Left ventricle myocardium inferior (tissue), 1 donor: ENCODE measurements at regions of chr13 and their contacts with region 1.

Region 1: DNA sequence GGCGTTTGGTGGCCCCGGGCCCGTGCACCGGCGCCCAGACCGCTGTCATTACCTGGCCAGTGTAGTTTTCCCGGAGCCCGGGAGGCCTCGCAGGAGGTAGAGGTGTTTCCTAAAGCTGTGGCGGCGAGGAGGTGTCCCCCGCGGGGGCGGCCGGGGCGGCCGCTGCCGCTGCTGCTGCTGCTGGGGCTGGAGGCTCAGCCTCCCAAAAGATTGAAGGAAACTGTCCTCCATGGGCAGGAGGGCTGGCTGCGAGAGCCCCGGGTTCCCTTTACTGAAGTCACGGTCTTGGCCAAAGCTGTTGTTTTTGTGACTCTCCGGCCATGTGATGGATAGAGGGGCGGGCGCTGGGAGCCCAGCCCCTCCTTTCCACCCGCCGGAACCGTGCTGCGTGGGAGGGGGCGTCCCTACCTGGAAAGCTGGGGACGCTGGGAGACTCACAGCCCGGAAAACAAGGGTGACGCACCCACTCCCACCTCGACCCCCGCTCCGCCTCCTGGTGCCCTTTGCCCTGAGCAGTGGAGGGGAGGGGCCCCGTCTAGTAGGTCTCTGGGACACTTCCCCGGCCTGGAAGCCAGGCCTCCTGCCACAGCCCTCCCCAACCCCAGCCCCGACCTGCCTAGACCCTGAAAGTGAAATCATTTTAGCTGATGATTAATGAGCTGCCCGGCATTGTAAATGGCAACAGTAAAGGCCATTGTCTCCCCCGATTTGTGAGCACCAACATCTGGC is at the start of gene N4BP2L1:
- DNase-seq: peak; percentile 64
- H3K4me3 ChIP-seq: peak within 1 kb of the TSS; percentile 83
- H3K27ac ChIP-seq: peak within 1 kb of the TSS; percentile 92
- H3K4me1 ChIP-seq: peaks cover 56% of the 10 kb centered on the region
- H3K27me3 ChIP-seq: no peaks in the 10 kb centered on the region
- CTCF ChIP-seq: no peak
- total RNA-seq, gene N4BP2L1: 4.6 TPM

Region 2: DNA sequence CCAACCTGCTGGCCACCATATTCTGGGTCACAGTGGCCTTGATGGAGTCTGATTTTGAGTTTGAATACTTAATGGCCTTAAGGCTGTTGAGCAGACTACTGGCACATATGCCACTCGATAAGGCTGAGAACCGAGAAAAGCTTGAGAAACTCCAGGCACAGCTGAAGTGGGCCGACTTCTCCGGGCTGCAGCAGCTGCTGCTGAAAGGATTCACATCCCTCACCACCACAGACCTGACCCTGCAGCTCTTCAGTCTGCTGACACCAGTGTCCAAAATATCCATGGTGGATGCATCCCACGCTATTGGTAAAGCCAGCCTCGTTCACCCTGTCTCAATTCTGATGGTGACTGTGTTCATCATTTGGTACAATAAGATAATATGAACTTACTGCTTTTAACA is 190.3 kb before region 1 on chr13:
- intact Hi-C with region 1: no loop called
- DNase-seq: no peak
- H3K4me3 ChIP-seq: no peak overlapping the region
- H3K27ac ChIP-seq: no peak overlapping the region
- H3K4me1 ChIP-seq: peaks cover 26% of the 10 kb centered on the region
- H3K27me3 ChIP-seq: no peaks in the 10 kb centered on the region
- CTCF ChIP-seq: no peak

Region 3: GRCh38 chr13:32538621-32539246 is 110.7 kb after region 1 on chr13 and contains the start of gene N4BP2L2:
- intact Hi-C with region 1: loop called (anchors 10 kb)
- DNase-seq: peak; percentile 90
- H3K4me3 ChIP-seq: peak within 1 kb of the TSS; percentile 80
- H3K27ac ChIP-seq: peak within 1 kb of the TSS; percentile 95
- H3K4me1 ChIP-seq: peaks cover 54% of the 10 kb centered on the region
- H3K27me3 ChIP-seq: no peaks in the 10 kb centered on the region
- CTCF ChIP-seq: peak; percentile 53
- total RNA-seq, gene N4BP2L2: 131 TPM

Region 4: GRCh38 chr13:32548837-32549236 is 120.8 kb after region 1 on chr13:
- intact Hi-C with region 1: no loop called
- DNase-seq: no peak
- H3K4me3 ChIP-seq: no peak overlapping the region
- H3K27ac ChIP-seq: no peak overlapping the region
- H3K4me1 ChIP-seq: no peaks in the 10 kb centered on the region
- H3K27me3 ChIP-seq: no peaks in the 10 kb centered on the region
- CTCF ChIP-seq: no peak